ENCODE measurements at regions of chr1 and their contacts with region 1.

Region 1: DNA sequence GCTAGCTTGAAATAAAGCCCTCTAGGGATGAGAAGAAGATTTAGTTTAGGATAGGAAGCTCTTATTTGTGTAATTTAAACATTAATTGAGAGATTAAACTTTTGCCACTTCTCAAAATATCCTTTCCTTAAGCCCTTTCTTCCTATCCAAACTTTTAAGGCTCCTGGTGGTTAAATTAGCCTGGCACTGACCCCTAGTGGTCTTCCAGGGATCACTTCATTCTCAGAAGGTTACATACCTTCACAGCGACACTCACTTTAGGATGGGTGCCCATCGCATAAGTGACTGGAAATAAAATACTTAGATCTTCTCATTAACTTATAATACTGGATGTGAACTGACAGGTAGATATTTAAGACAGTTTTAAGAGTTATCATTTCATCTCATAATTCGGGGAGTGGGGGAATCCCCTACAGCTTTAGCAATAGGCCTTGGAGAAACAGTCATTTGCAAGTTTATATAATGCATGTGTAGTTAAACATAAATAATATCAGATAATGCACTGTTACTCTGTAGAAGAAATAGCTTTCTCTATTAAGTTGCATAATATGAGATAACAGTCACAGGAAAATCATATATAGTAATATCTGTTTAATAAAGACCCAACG is 7.4 kb downstream of the LHX9 start:
- DNase-seq: peak in 5 of 7 donors; percentile 19 to 68 (median 48)
- H3K4me3 ChIP-seq: no peak overlapping the region
- H3K27ac ChIP-seq: no peak overlapping the region
- H3K4me1 ChIP-seq: peaks cover 0 to 2% of the 10 kb centered on the region in 2 donors
- H3K27me3 ChIP-seq: peaks cover 53% of the 10 kb centered on the region
- CTCF ChIP-seq: peak; percentile 20 to 64 (median 58)
- POLR2A ChIP-seq: no peak

Region 2: GRCh38 chr1:197638316-197638715 is 286.3 kb before region 1 on chr1:
- intact Hi-C with region 1: loop called in 1 of 2 experiments (anchors 10 kb)
- DNase-seq: no peak
- H3K4me3 ChIP-seq: no peak overlapping the region
- H3K27ac ChIP-seq: peak overlapping the region in 1 of 5 donors; percentile 0
- H3K4me1 ChIP-seq: peaks cover 0 to 4% of the 10 kb centered on the region in 2 donors
- H3K27me3 ChIP-seq: no peaks in the 10 kb centered on the region
- CTCF ChIP-seq: no peak
- POLR2A ChIP-seq: no peak